H1 (cell line): ENCODE measurements at regions of chr10 and their contacts with region 1.

Region 1: DNA sequence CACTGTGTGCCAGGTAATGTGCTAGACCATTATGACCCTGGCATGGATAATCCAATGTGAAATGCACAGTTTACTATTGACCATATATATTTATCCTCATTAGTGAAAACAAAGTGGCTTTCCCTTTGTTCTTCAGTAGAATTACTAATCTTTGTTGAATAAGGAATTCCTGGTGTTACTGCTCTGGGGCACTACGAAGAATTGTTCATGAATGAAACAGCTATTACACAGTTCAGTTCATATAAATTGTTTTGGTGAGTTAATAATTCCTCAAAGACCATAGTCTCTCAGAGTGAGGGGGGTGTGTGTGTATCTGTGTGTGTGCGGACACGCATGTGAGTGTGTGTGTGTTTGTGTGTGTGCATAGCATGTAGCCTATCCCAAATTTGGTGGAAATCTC is 668.0 kb upstream of the MBL2 start:
- DNase-seq: no peak
- H3K4me3 ChIP-seq: no peak overlapping the region
- H3K27ac ChIP-seq: no peak overlapping the region
- H3K4me1 ChIP-seq: no peaks in the 10 kb centered on the region
- H3K27me3 ChIP-seq: no peaks in the 10 kb centered on the region
- CTCF ChIP-seq: no peak
- EP300 ChIP-seq: no peak
- POLR2A ChIP-seq: no peak
- RAD21 ChIP-seq: no peak

Region 2: DNA sequence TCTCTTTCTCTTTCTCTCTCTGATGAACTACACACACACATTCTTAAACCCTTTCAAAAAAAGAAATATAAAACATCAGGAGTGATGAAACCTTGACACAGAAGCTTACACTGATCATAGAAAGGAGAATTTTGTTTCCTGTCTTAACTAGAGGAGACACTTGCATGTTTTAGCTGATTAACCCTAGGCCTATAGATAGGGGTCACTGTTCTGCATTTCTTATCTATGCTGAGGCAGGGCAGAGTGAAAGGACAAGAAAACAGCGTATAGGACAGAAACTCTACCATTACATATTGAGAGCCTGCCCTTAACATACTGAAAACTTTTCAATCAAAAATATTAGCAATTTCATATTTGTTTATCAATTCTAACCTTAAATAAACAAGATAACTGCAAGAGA is 12.6 kb after region 1 on chr10:
- CTCF ChIA-PET with region 1: interaction called, 11 read pairs
- POLR2A ChIA-PET with region 1: no interaction called
- DNase-seq: no peak
- H3K4me3 ChIP-seq: no peak overlapping the region
- H3K27ac ChIP-seq: no peak overlapping the region
- H3K4me1 ChIP-seq: peaks cover 0 to 3% (median 0%) of the 10 kb centered on the region in 4 experiments; a peak in 1 of 7 replicates
- H3K27me3 ChIP-seq: no peaks in the 10 kb centered on the region
- CTCF ChIP-seq: peak in 2 of 3 experiments; percentile 42 to 68; a peak in 2 of 4 replicates
- EP300 ChIP-seq: no peak
- POLR2A ChIP-seq: no peak
- RAD21 ChIP-seq: peak; percentile 50 to 64